Colonic mucosa (tissue), 4 donors: ENCODE measurements at regions of chr9 and their contacts with region 1.

Region 1: GRCh38 chr9:12884737-12885414 is 110.1 kb downstream of the LURAP1L start:
- DNase-seq: no peak
- H3K4me3 ChIP-seq: no peak overlapping the region
- H3K27ac ChIP-seq: no peak overlapping the region
- H3K4me1 ChIP-seq: no peaks in the 10 kb centered on the region
- H3K27me3 ChIP-seq: no peaks in the 10 kb centered on the region
- CTCF ChIP-seq: peak; percentile 50

Region 2: GRCh38 chr9:12723409-12724028 is 161.4 kb before region 1 on chr9:
- intact Hi-C with region 1: loop called (anchors 2 kb)
- DNase-seq: peak; percentile 21
- H3K4me3 ChIP-seq: no peak overlapping the region
- H3K27ac ChIP-seq: no peak overlapping the region
- H3K4me1 ChIP-seq: no peaks in the 10 kb centered on the region
- H3K27me3 ChIP-seq: no peaks in the 10 kb centered on the region
- CTCF ChIP-seq: peak; percentile 43

Region 3: GRCh38 chr9:12735665-12736064 is 149.2 kb before region 1 on chr9:
- intact Hi-C with region 1: no loop called
- DNase-seq: no peak
- H3K4me3 ChIP-seq: no peak overlapping the region
- H3K27ac ChIP-seq: no peak overlapping the region
- H3K4me1 ChIP-seq: no peaks in the 10 kb centered on the region
- H3K27me3 ChIP-seq: no peaks in the 10 kb centered on the region
- CTCF ChIP-seq: no peak

Region 4: DNA sequence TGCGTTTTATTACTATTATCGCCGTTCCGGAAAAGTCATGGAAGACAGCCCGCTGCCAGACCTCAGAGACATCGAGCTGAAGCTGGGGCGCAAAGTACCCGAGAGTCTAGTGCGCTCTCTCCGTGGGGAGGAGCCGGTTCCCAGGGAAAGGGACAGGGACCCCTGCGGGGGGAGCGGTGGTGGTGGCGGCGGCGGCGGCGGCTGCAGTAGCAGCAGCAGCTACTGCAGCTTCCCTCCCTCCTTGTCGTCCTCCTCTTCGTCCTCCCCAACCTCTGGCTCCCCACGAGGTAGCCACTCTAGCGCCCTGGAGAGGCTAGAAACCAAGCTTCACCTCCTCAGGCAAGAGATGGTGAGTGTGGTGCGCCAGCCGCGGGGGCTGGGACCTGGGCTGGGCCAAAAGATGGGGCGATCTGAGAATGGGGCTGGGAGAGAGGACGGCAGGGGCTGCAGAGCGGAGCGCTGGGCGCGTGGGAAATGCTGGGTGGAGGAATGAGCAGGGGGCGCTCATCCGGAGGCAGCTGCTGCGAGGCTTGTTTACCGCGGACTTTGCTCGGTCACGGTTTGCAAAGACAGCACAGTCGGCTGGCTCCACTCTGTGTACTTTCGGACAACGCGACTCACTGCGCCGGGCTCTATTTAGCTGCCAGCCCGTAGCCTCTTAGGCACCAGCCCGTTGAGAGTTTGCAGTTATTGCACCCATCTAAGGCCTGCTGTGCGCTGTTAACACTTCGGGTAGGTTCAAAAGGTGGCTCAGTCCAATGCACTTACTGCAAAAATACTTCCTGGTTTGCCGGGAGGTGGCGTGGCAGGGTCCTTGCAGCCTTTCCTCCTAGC is 109.0 kb before region 1 on chr9:
- intact Hi-C with region 1: loop called (anchors 5 kb)
- DNase-seq: peak; percentile 77
- H3K4me3 ChIP-seq: peak overlapping the region; percentile 69
- H3K27ac ChIP-seq: peak overlapping the region; percentile 96
- H3K4me1 ChIP-seq: no peaks in the 10 kb centered on the region
- H3K27me3 ChIP-seq: no peaks in the 10 kb centered on the region
- CTCF ChIP-seq: no peak

Region 5: GRCh38 chr9:12794101-12794799 is 90.6 kb before region 1 on chr9:
- intact Hi-C with region 1: no loop called
- DNase-seq: no peak
- H3K4me3 ChIP-seq: no peak overlapping the region
- H3K27ac ChIP-seq: no peak overlapping the region
- H3K4me1 ChIP-seq: no peaks in the 10 kb centered on the region
- H3K27me3 ChIP-seq: no peaks in the 10 kb centered on the region
- CTCF ChIP-seq: no peak

Region 6: GRCh38 chr9:12819436-12820185 is 65.3 kb before region 1 on chr9:
- intact Hi-C with region 1: loop called (anchors 2 kb)
- DNase-seq: no peak
- H3K4me3 ChIP-seq: no peak overlapping the region
- H3K27ac ChIP-seq: no peak overlapping the region
- H3K4me1 ChIP-seq: peaks cover 10% of the 10 kb centered on the region
- H3K27me3 ChIP-seq: no peaks in the 10 kb centered on the region
- CTCF ChIP-seq: peak; percentile 32